Left lung (tissue), 14 donors: ENCODE measurements at regions of chrX and their contacts with region 1.

Region 1: GRCh38 chrX:69357317-69357716 is 146.8 kb upstream of the NALF2 start:
- DNase-seq: no peak
- ATAC-seq: no peak
- H3K4me3 ChIP-seq: no peak overlapping the region
- H3K27ac ChIP-seq: no peak overlapping the region
- H3K4me1 ChIP-seq: no peaks in the 10 kb centered on the region
- H3K27me3 ChIP-seq: no peaks in the 10 kb centered on the region
- CTCF ChIP-seq: no peak

Region 2: GRCh38 chrX:69305333-69306062 is 51.8 kb before region 1 on chrX:
- intact Hi-C with region 1: loop called in 1 of 2 experiments (anchors 5 kb)
- DNase-seq: no peak
- ATAC-seq: no peak
- H3K4me3 ChIP-seq: no peak overlapping the region
- H3K27ac ChIP-seq: no peak overlapping the region
- H3K4me1 ChIP-seq: no peaks in the 10 kb centered on the region
- H3K27me3 ChIP-seq: peaks cover 3 to 17% of the 10 kb centered on the region in 2 donors
- CTCF ChIP-seq: no peak

Region 3: DNA sequence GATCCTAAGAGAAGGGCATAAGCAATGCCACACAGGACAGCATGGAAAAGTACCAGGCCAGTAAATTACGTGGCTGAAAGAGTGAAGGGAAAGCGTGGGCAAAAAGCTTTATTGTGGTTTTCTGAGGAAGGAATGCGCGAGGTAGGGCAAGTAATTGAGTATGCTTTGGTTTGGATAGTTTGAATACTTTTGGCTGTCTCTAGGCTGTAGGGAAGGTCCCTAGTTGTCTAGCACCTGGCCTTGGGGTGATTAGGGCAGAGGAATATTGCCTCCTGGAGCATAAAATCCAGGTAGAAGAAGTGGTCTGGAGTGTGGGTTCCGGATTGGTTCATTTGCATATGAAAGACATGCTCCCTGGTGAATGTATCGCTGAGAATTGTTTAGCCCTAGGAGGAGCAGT is 100.4 kb after region 1 on chrX:
- intact Hi-C with region 1: no loop called
- DNase-seq: no peak
- ATAC-seq: no peak
- H3K4me3 ChIP-seq: no peak overlapping the region
- H3K27ac ChIP-seq: no peak overlapping the region
- H3K4me1 ChIP-seq: no peaks in the 10 kb centered on the region
- H3K27me3 ChIP-seq: no peaks in the 10 kb centered on the region
- CTCF ChIP-seq: no peak